ENCODE measurements at regions of chr1 and their contacts with region 1.

Region 1: DNA sequence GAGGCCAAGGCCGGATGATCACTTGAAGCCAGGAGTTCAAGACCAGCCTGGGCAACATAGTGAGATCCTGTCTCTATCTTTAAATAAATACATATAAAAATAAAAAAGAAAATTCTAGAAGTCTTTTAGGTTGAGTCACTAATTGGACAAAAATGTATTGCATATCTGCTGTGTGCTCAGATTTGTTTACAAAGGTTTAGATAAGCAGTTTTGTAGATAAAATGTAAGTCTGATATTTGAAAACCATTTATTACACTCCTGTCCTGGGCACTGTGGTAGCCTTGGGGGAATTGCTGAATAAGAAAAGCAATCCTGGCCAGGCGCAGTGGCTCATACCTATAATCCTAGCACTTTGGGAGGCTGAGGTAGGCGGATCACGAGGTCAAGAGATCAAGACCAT is 11.6 kb downstream of the GMEB1 start:
- DNase-seq: no peak
- H3K4me3 ChIP-seq: no peak overlapping the region
- H3K4me3 Mint-ChIP-seq: no peak overlapping the region
- H3K27ac Mint-ChIP-seq: no peak overlapping the region
- H3K4me1 ChIP-seq: no peaks in the 10 kb centered on the region
- H3K4me1 Mint-ChIP-seq: peaks cover 7% of the 10 kb centered on the region
- H3K27me3 ChIP-seq: no peaks in the 10 kb centered on the region
- H3K27me3 Mint-ChIP-seq: no peaks in the 10 kb centered on the region
- CTCF ChIP-seq: no peak

Region 2: DNA sequence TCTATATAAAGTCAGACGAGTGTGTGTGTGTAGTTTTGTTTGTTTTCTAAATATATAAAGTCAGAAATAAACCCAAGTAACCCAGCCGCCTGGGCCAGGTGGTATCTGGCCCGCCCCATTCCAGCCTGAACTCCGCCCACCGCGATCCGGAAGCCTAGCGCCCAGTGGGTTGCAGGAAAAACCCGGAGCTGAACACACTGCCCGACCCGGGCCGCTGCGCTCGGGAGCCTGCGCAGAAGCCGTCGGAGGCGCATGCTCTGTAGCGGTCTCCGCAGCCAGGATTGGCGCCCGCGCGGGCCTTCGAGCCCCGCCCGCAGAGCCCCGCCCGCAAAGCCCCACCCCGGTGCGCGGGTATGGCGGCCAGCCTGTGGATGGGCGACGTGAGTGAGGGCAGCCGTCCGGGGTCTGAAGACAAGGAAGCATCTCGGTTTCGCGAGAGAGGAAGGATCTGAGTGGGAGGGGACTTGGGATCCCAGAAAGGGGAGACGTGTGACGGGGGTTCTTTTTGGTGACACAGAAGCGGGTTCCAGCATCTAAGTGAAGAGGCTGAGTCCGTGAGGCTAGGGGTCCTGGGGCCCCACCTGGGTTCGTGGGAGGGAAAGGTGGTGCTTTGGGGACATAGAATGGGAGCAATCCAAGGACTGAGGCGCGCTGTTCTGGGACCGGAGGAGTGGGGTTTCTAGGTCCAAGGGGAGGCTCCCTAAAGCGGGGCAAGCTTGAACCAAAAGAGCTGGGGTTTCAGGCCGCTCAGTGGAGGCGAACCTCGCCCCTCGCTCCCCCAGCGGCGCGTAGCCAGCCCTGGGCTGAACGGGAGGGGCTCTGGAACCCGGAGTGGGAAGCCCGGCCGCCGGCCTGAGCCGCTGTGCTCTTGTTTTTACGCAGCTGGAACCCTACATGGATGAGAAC is 127.1 kb before region 1 on chr1 and contains the start of gene TRNAU1AP:
- CTCF ChIA-PET with region 1: no interaction called
- POLR2A ChIA-PET with region 1: no interaction called
- intact Hi-C with region 1: no loop called
- DNase-seq: peak; percentile 92 to 94
- H3K4me3 ChIP-seq: peak within 1 kb of the TSS; percentile 70
- H3K4me3 Mint-ChIP-seq: peak within 1 kb of the TSS; percentile 85
- H3K27ac Mint-ChIP-seq: peak within 1 kb of the TSS; percentile 84
- H3K4me1 ChIP-seq: no peaks in the 10 kb centered on the region
- H3K4me1 Mint-ChIP-seq: no peaks in the 10 kb centered on the region
- H3K27me3 ChIP-seq: no peaks in the 10 kb centered on the region
- H3K27me3 Mint-ChIP-seq: no peaks in the 10 kb centered on the region
- CTCF ChIP-seq: no peak
- total RNA-seq, gene TRNAU1AP: 23.1 and 25.1 TPM in 2 replicates

Region 3: GRCh38 chr1:28756846-28757245 is 76.7 kb after region 1 on chr1:
- CTCF ChIA-PET with region 1: no interaction called
- POLR2A ChIA-PET with region 1: interaction called, 10 read pairs
- intact Hi-C with region 1: no loop called
- DNase-seq: peak in 1 of 2 experiments; percentile 10
- H3K4me3 ChIP-seq: no peak overlapping the region
- H3K4me3 Mint-ChIP-seq: no peak overlapping the region
- H3K27ac Mint-ChIP-seq: no peak overlapping the region
- H3K4me1 ChIP-seq: peaks cover 13% of the 10 kb centered on the region
- H3K4me1 Mint-ChIP-seq: peaks cover 7% of the 10 kb centered on the region
- H3K27me3 ChIP-seq: no peaks in the 10 kb centered on the region
- H3K27me3 Mint-ChIP-seq: no peaks in the 10 kb centered on the region
- CTCF ChIP-seq: no peak